ENCODE measurements at regions of chr2 and their contacts with region 1.

Region 1: DNA sequence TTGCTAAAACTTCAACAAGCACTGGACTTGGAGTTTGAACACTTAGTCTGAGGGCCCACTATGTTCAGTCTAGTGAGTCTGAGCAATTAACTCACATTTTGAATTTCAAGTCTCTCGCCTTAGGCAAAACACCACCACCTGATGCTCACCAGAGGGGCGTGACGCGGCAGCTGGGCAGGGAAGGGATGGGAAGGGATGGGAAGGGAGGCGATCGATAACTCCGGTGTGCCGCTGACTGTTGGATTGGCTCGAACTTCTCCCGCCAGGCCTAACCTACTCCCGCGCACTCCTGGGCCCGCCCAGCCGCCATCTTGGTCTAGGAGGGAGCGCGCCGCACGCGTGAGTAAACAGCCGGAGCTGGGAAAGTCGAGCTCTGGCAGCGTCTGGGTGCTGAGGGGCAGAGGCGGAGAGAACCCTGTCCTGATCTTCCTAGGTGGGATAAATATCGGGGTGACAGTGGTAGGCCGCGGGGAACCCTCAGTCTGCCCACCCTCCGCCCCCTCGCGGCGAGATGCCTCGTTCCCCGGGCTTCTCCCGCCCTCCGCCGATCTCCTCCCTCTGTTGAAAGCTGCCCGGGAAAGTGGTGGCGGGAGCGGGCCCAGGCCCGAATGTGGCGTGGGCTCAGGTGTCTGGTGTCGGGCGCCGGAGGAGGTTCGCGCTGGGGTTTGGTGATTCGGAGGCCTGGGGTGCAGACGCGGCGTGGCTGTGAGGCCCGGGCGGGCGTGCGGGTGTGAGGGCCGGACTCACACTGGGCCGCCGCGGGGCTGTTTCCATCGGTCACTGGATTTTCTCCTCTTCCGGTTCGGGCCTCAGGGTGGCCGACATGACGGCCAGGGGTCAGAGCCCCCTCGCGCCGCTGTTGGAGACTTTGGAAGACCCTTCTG is at the start of gene RIF1:
- DNase-seq: peak; percentile 73
- ATAC-seq: peak; percentile 90
- H3K4me3 Mint-ChIP-seq: peak within 1 kb of the TSS; percentile 89
- H3K27ac Mint-ChIP-seq: peak within 1 kb of the TSS; percentile 80
- H3K4me1 Mint-ChIP-seq: peaks cover 26% of the 10 kb centered on the region
- H3K27me3 Mint-ChIP-seq: no peaks in the 10 kb centered on the region
- CTCF ChIP-seq: no peak
- total RNA-seq, gene RIF1: 43.7 and 51.1 TPM in 2 replicates

Region 2: DNA sequence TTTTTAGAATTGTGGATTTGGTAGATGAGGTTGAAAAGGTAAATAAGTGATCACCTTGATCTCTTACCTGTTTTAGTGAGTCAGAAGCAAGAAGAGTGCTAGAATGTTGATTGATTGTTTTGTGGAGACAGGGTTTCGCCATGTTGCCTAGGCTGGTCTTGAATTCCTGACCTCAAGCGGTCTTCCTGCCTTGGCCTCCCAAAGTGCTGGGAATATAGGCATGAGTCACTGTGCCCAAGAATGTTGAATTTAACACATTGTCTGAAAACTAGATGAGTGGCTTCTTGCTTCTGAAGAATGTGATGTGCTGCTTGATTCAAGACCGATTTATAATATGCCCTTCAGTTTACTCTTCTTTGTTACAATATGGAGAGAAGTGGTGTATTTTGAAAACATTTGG is 1046.4 kb after region 1 on chr2:
- CTCF ChIA-PET with region 1: no interaction called
- POLR2A ChIA-PET with region 1: no interaction called
- intact Hi-C with region 1: no loop called
- DNase-seq: no peak
- ATAC-seq: no peak
- H3K4me3 Mint-ChIP-seq: no peak overlapping the region
- H3K27ac Mint-ChIP-seq: no peak overlapping the region
- H3K4me1 Mint-ChIP-seq: no peaks in the 10 kb centered on the region
- H3K27me3 Mint-ChIP-seq: no peaks in the 10 kb centered on the region
- CTCF ChIP-seq: no peak

Region 3: DNA sequence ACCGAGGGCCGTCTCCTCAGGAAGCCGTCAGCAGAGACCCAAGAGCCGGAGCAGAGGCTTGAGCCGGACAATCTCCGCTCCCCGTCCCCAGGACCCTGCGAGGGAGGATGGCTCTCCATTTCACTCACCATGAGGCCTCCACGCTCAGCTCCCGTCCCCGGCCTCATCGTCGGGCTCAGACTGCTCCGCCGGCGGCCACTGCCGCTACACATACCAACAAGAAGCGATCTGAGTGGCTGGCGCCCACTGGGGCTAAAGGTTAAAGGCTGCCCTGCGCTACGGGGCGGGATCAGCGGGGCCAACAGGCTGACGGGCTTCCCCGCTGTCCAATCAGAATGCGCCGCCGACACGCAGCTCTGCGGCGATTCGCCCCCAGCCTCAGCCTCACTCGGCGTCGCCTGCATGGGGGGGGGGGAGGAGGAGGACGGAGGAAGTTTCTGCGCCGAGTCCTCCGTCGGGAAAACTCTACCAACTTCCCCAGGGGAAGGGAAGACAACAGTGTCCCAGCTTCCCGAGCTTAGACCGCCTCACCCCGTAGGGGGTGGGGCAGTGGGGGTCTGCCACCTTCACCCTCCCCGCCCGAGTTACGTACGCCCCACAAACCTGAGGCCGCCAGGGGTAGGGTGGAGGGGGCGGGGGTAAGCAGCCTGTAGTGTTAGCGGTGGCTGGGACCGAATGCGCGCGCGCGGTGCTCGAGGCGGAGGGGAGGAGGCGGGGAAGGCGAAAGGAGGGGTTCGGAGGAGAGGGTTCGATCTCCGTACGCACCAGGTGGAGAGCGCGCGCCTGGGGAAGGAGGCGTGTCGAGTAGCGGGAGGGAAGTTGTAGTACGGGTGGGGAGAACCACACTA is 1307.6 kb after region 1 on chr2 and contains the start of gene PRPF40A:
- CTCF ChIA-PET with region 1: no interaction called
- POLR2A ChIA-PET with region 1: no interaction called
- intact Hi-C with region 1: loop called (anchors 5 kb)
- DNase-seq: peak; percentile 97
- ATAC-seq: peak; percentile 76
- H3K4me3 Mint-ChIP-seq: peak within 1 kb of the TSS; percentile 100
- H3K27ac Mint-ChIP-seq: peak within 1 kb of the TSS; percentile 98
- H3K4me1 Mint-ChIP-seq: peaks cover 51% of the 10 kb centered on the region
- H3K27me3 Mint-ChIP-seq: no peaks in the 10 kb centered on the region
- CTCF ChIP-seq: no peak
- total RNA-seq, gene PRPF40A: 126 and 129 TPM in 2 replicates